PC-9 (cell line): ENCODE measurements at regions of chr11 and their contacts with region 1.

Region 1: DNA sequence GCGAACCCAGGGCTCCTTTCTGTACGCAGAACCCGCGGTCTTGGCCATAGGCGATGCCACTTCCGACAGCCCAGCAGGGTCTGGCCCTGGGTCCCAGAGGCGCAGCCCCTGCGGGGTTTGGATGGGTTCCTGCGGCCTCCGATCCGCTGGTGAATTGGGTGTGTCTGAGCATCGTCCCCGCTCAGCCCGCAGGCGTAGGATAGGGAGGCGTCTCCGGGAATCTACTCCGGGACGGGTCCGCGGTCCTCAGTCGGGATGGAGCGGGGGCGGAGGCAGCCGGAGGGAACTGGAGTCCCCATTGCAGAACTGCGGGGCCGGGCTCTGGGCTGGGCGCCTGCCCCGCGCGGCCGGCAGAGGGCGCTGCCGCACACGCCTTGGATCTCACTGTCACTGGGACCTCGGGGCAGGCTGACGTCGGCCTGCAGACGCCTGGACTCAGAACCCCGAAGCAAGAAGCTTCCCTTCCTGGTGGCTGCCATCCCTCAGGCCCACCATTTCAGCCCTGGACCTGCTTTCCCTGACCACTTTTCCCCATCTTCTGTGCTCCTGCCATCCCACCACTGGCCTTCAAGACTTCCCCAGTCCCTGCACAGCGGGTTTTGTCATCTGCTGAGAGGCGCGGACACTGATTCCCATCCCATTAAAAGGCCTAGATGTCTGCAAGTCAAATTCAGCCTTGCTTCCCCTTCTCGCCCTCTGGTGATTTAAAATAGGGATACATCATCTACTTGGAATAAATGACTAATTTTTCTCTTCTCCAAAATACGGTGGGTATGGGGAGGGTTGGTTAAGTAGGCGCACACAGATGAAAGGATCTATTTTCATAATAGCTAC is 38.3 kb upstream of the CREB3L1 start:
- DNase-seq: peak; percentile 69 to 90
- H3K4me3 ChIP-seq: peak overlapping the region; percentile 72
- H3K27ac ChIP-seq: no peak overlapping the region
- H3K4me1 ChIP-seq: peaks cover 47% of the 10 kb centered on the region
- H3K27me3 ChIP-seq: no peaks in the 10 kb centered on the region
- CTCF ChIP-seq: peak; percentile 98

Region 2: GRCh38 chr11:45846974-45847910 is 391.9 kb before region 1 on chr11 and contains the start of gene CRY2:
- CTCF ChIA-PET with region 1: no interaction called
- POLR2A ChIA-PET with region 1: no interaction called
- intact Hi-C with region 1: loop called (anchors 10 kb)
- DNase-seq: peak; percentile 88 to 100
- H3K4me3 ChIP-seq: peak within 1 kb of the TSS; percentile 91
- H3K27ac ChIP-seq: peak within 1 kb of the TSS; percentile 30; the same call in 1 of the 2 replicates
- H3K4me1 ChIP-seq: peaks cover 18% of the 10 kb centered on the region
- H3K27me3 ChIP-seq: no peaks in the 10 kb centered on the region
- CTCF ChIP-seq: no peak
- total RNA-seq, gene CRY2: 17.5 and 27.3 TPM in 2 replicates

Region 3: GRCh38 chr11:46121724-46122477 is 117.3 kb before region 1 on chr11:
- CTCF ChIA-PET with region 1: interaction called, 20 read pairs
- POLR2A ChIA-PET with region 1: no interaction called
- intact Hi-C with region 1: loop called (anchors 1 kb)
- DNase-seq: peak; percentile 74 to 81
- H3K4me3 ChIP-seq: peak overlapping the region; percentile 64
- H3K27ac ChIP-seq: peak overlapping the region; percentile 24
- H3K4me1 ChIP-seq: peaks cover 41% of the 10 kb centered on the region
- H3K27me3 ChIP-seq: no peaks in the 10 kb centered on the region
- CTCF ChIP-seq: no peak

Region 4: GRCh38 chr11:46176402-46176801 is 62.8 kb before region 1 on chr11:
- CTCF ChIA-PET with region 1: no interaction called
- POLR2A ChIA-PET with region 1: no interaction called
- intact Hi-C with region 1: loop called (anchors 5 kb)
- DNase-seq: peak; percentile 65 to 80
- H3K4me3 ChIP-seq: peak overlapping the region; percentile 4; the same call in 1 of the 2 replicates
- H3K27ac ChIP-seq: no peak overlapping the region
- H3K4me1 ChIP-seq: peaks cover 16% of the 10 kb centered on the region
- H3K27me3 ChIP-seq: no peaks in the 10 kb centered on the region
- CTCF ChIP-seq: no peak

Region 5: DNA sequence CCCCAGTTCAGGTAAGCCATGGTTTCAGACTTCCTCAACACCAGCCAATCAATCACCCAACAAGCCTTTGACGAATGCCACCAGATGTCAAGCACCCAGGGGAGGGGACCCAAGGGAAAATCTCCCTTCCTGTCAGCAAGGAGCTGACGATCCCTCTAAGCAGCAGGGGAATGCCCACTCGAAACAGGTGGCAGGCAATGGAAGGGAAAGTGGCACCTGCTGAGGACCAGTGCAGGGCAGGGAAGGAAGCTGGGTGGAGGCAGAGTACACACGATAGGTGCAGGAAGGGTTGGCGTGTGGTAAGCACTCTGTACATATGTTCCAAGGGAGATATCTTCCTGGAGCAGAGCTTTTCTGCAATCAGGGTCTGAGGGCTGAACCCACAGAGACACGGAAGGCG is 26.6 kb after region 1 on chr11:
- CTCF ChIA-PET with region 1: no interaction called
- POLR2A ChIA-PET with region 1: no interaction called
- intact Hi-C with region 1: no loop called
- DNase-seq: no peak
- H3K4me3 ChIP-seq: no peak overlapping the region
- H3K27ac ChIP-seq: no peak overlapping the region
- H3K4me1 ChIP-seq: no peaks in the 10 kb centered on the region
- H3K27me3 ChIP-seq: no peaks in the 10 kb centered on the region
- CTCF ChIP-seq: no peak

Region 6: GRCh38 chr11:46308631-46309419 is 69.6 kb after region 1 on chr11:
- CTCF ChIA-PET with region 1: interaction called, 21 read pairs
- POLR2A ChIA-PET with region 1: interaction called, 11 read pairs
- intact Hi-C with region 1: loop called (anchors 1 kb)
- DNase-seq: peak; percentile 54 to 74
- H3K4me3 ChIP-seq: no peak overlapping the region
- H3K27ac ChIP-seq: no peak overlapping the region
- H3K4me1 ChIP-seq: peaks cover 31% of the 10 kb centered on the region
- H3K27me3 ChIP-seq: no peaks in the 10 kb centered on the region
- CTCF ChIP-seq: peak; percentile 99

Region 7: DNA sequence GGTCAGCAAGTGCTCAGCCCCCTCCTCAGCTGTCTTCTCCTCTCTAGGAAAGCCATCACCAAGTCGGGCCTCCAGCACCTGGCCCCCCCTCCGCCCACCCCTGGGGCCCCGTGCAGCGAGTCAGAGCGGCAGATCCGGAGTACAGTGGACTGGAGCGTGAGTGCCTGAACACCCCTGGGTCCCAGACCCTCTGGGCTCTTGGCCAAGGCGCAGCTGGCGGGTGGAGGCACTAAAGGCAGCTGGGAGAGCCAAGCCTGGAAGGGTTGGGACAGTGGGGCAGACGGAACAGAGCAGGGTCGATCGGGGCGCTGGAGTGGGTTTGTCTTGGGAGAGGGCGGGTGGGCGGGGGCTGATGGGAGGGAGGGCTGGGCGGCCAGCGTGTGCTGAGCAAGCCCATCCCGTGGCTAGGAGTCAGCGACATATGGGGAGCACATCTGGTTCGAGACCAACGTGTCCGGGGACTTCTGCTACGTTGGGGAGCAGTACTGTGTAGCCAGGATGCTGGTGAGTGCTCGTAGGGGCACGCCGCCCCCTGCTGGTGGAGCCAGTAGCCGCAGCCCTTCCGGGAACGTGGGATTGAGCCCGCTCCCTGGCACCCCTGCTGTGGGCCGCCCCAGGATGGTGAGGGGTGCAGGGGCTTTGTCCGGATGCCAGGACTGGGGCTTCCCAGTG is 128.2 kb after region 1 on chr11:
- CTCF ChIA-PET with region 1: interaction called, 3 read pairs
- POLR2A ChIA-PET with region 1: no interaction called
- intact Hi-C with region 1: loop called (anchors 1 kb)
- DNase-seq: peak in 1 of 2 experiments; percentile 67
- H3K4me3 ChIP-seq: no peak overlapping the region
- H3K27ac ChIP-seq: no peak overlapping the region
- H3K4me1 ChIP-seq: peaks cover 20% of the 10 kb centered on the region
- H3K27me3 ChIP-seq: no peaks in the 10 kb centered on the region
- CTCF ChIP-seq: peak; percentile 88